ENCODE measurements at regions of chr4 and their contacts with region 1.

Region 1: GRCh38 chr4:141711014-141711610 is 74.7 kb downstream of the IL15 start:
- DNase-seq: no peak
- ATAC-seq: peak in 1 of 8 donors; percentile 44
- H3K4me3 ChIP-seq: no peak overlapping the region
- H3K27ac ChIP-seq: no peak overlapping the region
- H3K4me1 ChIP-seq: peaks cover 0 to 4% (median 0%) of the 10 kb centered on the region in 9 donors
- H3K27me3 ChIP-seq: no peaks in the 10 kb centered on the region
- CTCF ChIP-seq: peak; percentile 19 to 75 (median 68)

Region 2: DNA sequence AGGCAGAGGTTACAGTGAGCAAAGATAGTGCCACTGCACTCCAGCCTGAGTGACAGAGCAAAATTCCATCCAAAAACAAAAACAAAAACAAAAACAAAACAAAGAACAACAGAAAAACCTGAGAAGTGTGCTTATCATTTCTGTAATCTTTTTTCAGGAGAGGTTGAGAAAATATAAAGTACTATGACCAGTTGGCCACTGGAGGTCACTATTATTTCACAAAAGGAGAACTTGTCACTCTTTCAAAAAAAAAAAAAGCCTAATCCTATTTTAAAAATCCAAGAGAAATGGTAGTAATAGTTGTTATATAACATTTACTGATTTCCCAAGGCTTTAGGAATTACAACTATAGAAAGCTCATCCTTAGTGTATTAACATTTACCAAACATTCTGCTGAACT is 552.9 kb before region 1 on chr4:
- intact Hi-C with region 1: loop called in 2 of 10 experiments (anchors 5 to 10 kb)
- DNase-seq: no peak
- ATAC-seq: peak in 1 of 8 donors; percentile 49
- H3K4me3 ChIP-seq: no peak overlapping the region
- H3K27ac ChIP-seq: no peak overlapping the region
- H3K4me1 ChIP-seq: peaks cover 0 to 13% (median 5%) of the 10 kb centered on the region in 9 donors
- H3K27me3 ChIP-seq: peaks cover 0 to 3% (median 0%) of the 10 kb centered on the region in 7 donors
- CTCF ChIP-seq: peak in 8 of 9 donors; percentile 44 to 69 (median 56)

Region 3: DNA sequence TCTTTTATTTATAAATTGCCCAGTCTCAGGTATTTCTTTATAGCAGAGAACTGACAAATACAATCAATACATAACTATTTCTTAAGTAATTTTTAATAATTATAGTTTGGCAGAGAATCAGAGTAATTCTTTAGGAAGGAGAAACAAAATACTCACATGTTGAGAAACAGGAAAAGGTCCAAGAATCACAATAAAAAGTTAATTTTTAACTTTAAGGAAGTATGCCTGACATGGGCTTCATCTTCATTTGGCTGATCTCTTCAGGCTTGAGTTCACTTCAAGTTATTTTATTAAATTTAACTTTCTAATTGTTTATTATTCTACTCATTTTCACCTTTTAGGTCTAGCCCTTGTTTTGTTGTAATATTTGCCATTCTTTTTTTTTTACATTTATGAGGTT is 541.7 kb before region 1 on chr4:
- intact Hi-C with region 1: loop called in 2 of 10 experiments (anchors 5 to 10 kb)
- DNase-seq: no peak
- ATAC-seq: no peak
- H3K4me3 ChIP-seq: no peak overlapping the region
- H3K27ac ChIP-seq: no peak overlapping the region
- H3K4me1 ChIP-seq: no peaks in the 10 kb centered on the region
- H3K27me3 ChIP-seq: peaks cover 0 to 4% (median 0%) of the 10 kb centered on the region in 7 donors
- CTCF ChIP-seq: no peak

Region 4: DNA sequence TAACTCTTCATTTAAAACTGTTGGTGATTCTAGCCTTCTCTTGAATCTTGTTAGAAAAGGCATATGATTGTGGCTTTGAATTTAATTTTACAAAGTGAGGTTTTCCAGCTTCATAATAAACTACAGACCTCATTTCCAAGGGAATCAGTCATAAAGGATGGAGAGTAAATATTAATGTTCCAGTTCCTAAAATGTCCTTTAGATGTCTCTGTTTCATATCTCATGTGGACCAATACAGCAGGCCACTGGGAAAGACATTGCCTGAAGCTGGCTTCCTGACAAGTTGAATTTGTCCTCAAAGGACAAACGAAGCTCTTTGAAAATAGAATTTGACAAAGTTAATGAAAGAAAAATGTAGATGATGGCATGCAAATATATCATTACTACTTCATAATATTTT is 365.0 kb before region 1 on chr4:
- intact Hi-C with region 1: loop called (anchors 2 to 10 kb)
- DNase-seq: no peak
- ATAC-seq: peak in 7 of 8 donors; percentile 59 to 86 (median 82)
- H3K4me3 ChIP-seq: no peak overlapping the region
- H3K27ac ChIP-seq: no peak overlapping the region
- H3K4me1 ChIP-seq: peaks cover 0 to 24% (median 0%) of the 10 kb centered on the region in 9 donors
- H3K27me3 ChIP-seq: no peaks in the 10 kb centered on the region
- CTCF ChIP-seq: peak; percentile 39 to 74 (median 64)

Region 5: DNA sequence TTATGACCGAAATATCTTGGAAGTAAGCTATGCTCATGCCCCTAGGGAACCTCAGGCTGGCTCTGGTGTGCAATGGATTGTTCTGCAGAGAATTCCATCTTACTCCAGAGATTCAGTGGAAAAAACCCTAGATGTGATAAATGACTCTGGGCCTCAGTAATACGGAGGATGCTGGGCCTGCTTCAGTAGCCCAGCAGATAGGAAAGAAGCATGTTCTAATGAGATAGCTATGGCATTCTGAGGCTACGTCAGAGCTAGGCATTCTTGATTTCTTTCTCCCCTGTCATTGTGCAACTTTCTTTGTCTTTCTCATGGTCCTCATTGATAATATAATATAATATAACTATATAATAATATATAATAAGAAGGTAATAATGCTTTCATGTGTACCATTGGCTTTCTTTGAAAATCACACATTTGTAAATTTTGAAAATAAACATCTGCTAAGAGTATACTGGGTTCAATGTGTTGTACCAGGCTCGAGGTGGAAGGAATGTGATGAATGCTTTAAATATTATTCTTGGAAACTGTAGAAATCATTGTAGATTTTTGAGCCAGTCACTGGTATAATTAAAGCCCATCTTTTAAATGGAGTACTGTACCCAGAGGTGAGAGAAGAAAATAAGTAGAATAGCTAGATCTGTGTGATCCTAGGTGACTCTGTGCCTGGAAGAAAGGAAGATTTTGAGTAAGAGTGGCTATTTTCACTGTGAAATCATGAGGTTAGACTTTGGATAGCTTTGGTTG is 77.2 kb after region 1 on chr4:
- intact Hi-C with region 1: no loop called
- DNase-seq: no peak
- ATAC-seq: no peak
- H3K4me3 ChIP-seq: no peak overlapping the region
- H3K27ac ChIP-seq: no peak overlapping the region
- H3K4me1 ChIP-seq: no peaks in the 10 kb centered on the region
- H3K27me3 ChIP-seq: no peaks in the 10 kb centered on the region
- CTCF ChIP-seq: no peak